ENCODE measurements at regions of chr10 and their contacts with region 1.

Region 1: GRCh38 chr10:78424719-78425118 is 391.1 kb downstream of the RPS24 start:
- DNase-seq: peak; percentile 48
- ATAC-seq: peak; percentile 91
- H3K4me3 ChIP-seq: no peak overlapping the region
- H3K27ac ChIP-seq: no peak overlapping the region
- H3K4me1 ChIP-seq: no peaks in the 10 kb centered on the region
- H3K27me3 ChIP-seq: peaks cover 5 to 30% of the 10 kb centered on the region in 2 experiments; a peak in 4 of 5 replicates
- CTCF ChIP-seq: peak; percentile 74
- EP300 ChIP-seq: no peak
- POLR2A ChIP-seq: no peak
- RAD21 ChIP-seq: 0 out of 2 replicates have a peak, but pooled peaks have one; percentile 20

Region 2: GRCh38 chr10:78357141-78358063 is 67.3 kb before region 1 on chr10:
- CTCF ChIA-PET with region 1: no interaction called
- POLR2A ChIA-PET with region 1: no interaction called
- in situ Hi-C with region 1: no loop called
- intact Hi-C with region 1: no loop called
- DNase-seq: no peak
- ATAC-seq: no peak
- H3K4me3 ChIP-seq: no peak overlapping the region
- H3K27ac ChIP-seq: no peak overlapping the region
- H3K4me1 ChIP-seq: no peaks in the 10 kb centered on the region
- H3K27me3 ChIP-seq: peaks cover 2 to 60% of the 10 kb centered on the region in 2 experiments; a peak in 4 of 5 replicates
- CTCF ChIP-seq: no peak
- EP300 ChIP-seq: no peak
- POLR2A ChIP-seq: no peak
- RAD21 ChIP-seq: no peak

Region 3: DNA sequence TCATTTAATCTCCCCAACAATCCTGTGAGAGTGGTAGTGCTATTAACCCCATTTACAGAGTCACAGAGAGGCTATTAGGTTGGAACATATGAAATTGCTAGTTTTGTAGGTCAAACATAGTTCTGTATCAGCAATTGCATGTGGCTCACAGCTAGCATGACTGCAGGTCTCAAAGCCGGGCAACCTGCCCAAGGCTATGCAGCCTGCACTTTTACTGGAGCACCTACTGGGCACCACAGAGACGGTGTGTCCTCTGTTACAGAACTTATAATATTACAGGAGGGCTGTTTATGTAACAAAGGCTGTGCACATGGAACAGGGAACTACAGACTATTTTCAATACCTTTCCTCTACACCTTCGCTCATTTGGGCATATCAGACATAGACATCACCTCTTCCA is 35.3 kb before region 1 on chr10:
- CTCF ChIA-PET with region 1: no interaction called
- POLR2A ChIA-PET with region 1: no interaction called
- in situ Hi-C with region 1: no loop called
- intact Hi-C with region 1: no loop called
- DNase-seq: no peak
- ATAC-seq: no peak
- H3K4me3 ChIP-seq: no peak overlapping the region
- H3K27ac ChIP-seq: no peak overlapping the region
- H3K4me1 ChIP-seq: no peaks in the 10 kb centered on the region
- H3K27me3 ChIP-seq: peaks cover 5 to 39% of the 10 kb centered on the region in 2 experiments; a peak in 4 of 5 replicates
- CTCF ChIP-seq: no peak
- EP300 ChIP-seq: no peak
- POLR2A ChIP-seq: no peak
- RAD21 ChIP-seq: no peak

Region 4: GRCh38 chr10:78489962-78490361 is 65.2 kb after region 1 on chr10:
- CTCF ChIA-PET with region 1: no interaction called
- POLR2A ChIA-PET with region 1: no interaction called
- in situ Hi-C with region 1: no loop called
- intact Hi-C with region 1: loop called (anchors 2 kb)
- DNase-seq: no peak
- ATAC-seq: no peak
- H3K4me3 ChIP-seq: no peak overlapping the region
- H3K27ac ChIP-seq: no peak overlapping the region
- H3K4me1 ChIP-seq: no peaks in the 10 kb centered on the region
- H3K27me3 ChIP-seq: no peaks in the 10 kb centered on the region; a peak in 1 of 5 replicates
- CTCF ChIP-seq: no peak
- EP300 ChIP-seq: no peak
- POLR2A ChIP-seq: no peak
- RAD21 ChIP-seq: no peak

Region 5: DNA sequence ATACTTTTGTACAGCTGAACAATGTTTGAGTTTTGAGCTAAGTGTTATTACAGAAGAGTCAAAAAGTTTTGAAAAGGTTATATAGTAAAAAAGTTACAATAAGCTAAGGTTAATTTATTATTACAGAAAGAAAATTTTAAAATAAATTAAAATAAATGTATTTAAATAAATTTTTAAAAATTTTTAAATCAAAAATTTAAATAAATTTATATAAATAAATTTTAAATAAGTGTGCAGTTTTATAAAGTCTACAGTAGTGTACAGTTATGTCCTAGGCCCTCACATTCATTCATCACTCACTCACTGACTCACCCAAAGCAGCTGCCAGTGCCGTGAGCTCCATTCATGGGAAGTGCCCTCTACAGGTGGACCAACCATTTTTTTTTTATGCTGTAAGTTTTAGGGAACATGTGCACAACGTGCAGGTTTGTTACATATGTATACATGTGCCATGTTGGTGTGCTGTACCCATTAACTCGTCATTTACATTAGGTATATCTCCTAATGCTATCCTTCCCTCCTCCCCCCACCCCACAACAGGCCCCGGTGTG is 181.2 kb after region 1 on chr10:
- CTCF ChIA-PET with region 1: interaction called, 3 read pairs
- POLR2A ChIA-PET with region 1: no interaction called
- in situ Hi-C with region 1: no loop called
- intact Hi-C with region 1: loop called (anchors 2 kb)
- DNase-seq: peak; percentile 55
- ATAC-seq: peak; percentile 73
- H3K4me3 ChIP-seq: no peak overlapping the region
- H3K27ac ChIP-seq: no peak overlapping the region
- H3K4me1 ChIP-seq: no peaks in the 10 kb centered on the region
- H3K27me3 ChIP-seq: peaks cover 2 to 3% of the 10 kb centered on the region in 2 experiments; a peak in 4 of 5 replicates
- CTCF ChIP-seq: peak; percentile 46
- EP300 ChIP-seq: no peak
- POLR2A ChIP-seq: no peak
- RAD21 ChIP-seq: no peak